Transverse colon (tissue), 4 donors: ENCODE measurements at regions of chr19 and their contacts with region 1.

Region 1: DNA sequence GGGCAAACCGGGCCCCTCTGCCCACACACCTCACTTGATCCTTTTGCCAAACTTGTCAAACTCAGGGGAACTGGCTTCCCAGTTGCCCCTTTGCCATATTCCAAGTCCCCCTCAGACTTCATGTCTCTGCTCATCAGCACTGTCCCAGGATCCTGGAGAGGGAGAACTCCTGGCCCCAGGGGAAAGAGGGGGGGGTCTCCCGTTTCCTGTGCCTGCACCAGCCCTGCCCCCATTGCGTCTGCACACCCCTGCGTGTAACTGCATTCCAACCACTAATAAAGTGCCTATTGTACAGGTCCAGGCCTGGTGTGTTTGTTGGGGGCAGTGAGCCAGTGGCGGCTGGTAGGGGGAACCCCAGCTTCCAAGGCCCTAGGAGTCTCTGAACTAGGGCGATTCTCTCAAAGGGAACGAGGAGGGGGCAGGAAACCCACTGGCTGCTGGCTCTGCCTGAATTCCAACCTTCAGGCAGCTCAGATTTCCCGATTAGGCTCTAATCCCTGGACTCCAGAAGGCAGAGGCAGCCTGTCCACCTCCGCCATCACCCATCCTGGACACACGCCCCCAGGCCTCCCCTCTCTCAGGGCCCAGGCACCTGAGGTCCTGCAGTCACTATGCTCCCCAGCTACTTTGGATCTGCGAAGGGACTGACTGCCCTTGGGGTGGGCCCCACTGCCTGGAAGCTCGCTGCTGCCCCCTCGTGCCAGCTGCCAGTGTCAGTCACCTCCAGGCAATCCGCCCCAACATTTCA is 9.7 kb upstream of the ILF3 start:
- DNase-seq: peak; percentile 90
- H3K4me3 ChIP-seq: no peak overlapping the region
- H3K27ac ChIP-seq: peak overlapping the region in 3 of 4 donors; percentile 19 to 51 (median 29)
- H3K4me1 ChIP-seq: peaks cover 0 to 9% (median 4%) of the 10 kb centered on the region in 4 donors
- H3K27me3 ChIP-seq: no peaks in the 10 kb centered on the region
- CTCF ChIP-seq: peak; percentile 83 to 96 (median 85)
- EP300 ChIP-seq: no peak
- POLR2A ChIP-seq: peak; percentile 8

Region 2: DNA sequence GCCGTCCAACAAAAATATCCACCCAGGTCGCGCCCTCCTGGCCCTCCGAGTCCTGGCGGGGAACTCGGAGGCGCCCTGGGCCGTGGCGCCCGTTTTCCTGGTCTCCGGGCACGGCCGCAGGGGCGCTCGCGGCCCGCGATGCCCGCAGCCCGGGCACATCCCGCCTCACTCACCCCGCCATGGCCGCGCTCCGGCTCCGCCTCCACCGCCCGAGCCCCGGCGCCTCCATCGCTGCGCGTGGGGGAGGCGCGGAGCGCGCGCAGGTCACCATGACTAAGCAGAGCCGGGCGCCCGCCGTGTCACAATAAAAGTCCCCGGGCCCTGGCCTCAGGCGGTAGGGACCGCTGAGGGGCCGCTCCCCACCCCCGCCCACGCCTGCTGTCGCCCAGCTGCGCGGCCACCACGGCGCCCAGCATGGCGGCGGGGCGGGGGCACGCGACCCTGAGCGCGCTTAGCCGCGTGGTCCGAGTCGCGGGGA is 141.9 kb before region 1 on chr19:
- in situ Hi-C with region 1: no loop called
- intact Hi-C with region 1: loop called (anchors 10 kb)
- DNase-seq: peak; percentile 95
- H3K4me3 ChIP-seq: peak overlapping the region; percentile 77 to 100 (median 94)
- H3K27ac ChIP-seq: peak overlapping the region; percentile 98 to 100 (median 98)
- H3K4me1 ChIP-seq: peaks cover 20 to 50% (median 35%) of the 10 kb centered on the region in 4 donors
- H3K27me3 ChIP-seq: no peaks in the 10 kb centered on the region
- CTCF ChIP-seq: no peak
- EP300 ChIP-seq: peak; percentile 30
- POLR2A ChIP-seq: peak; percentile 51

Region 3: GRCh38 chr19:10580979-10581631 is 63.3 kb before region 1 on chr19:
- in situ Hi-C with region 1: loop called (anchors 5 to 10 kb)
- intact Hi-C with region 1: loop called (anchors 2 kb)
- DNase-seq: peak; percentile 91
- H3K4me3 ChIP-seq: no peak overlapping the region
- H3K27ac ChIP-seq: no peak overlapping the region
- H3K4me1 ChIP-seq: peaks cover 0 to 4% (median 2%) of the 10 kb centered on the region in 4 donors
- H3K27me3 ChIP-seq: no peaks in the 10 kb centered on the region
- CTCF ChIP-seq: peak; percentile 98 to 100 (median 98)
- EP300 ChIP-seq: no peak
- POLR2A ChIP-seq: no peak